ENCODE measurements at regions of chr7 and their contacts with region 1.

Region 1: DNA sequence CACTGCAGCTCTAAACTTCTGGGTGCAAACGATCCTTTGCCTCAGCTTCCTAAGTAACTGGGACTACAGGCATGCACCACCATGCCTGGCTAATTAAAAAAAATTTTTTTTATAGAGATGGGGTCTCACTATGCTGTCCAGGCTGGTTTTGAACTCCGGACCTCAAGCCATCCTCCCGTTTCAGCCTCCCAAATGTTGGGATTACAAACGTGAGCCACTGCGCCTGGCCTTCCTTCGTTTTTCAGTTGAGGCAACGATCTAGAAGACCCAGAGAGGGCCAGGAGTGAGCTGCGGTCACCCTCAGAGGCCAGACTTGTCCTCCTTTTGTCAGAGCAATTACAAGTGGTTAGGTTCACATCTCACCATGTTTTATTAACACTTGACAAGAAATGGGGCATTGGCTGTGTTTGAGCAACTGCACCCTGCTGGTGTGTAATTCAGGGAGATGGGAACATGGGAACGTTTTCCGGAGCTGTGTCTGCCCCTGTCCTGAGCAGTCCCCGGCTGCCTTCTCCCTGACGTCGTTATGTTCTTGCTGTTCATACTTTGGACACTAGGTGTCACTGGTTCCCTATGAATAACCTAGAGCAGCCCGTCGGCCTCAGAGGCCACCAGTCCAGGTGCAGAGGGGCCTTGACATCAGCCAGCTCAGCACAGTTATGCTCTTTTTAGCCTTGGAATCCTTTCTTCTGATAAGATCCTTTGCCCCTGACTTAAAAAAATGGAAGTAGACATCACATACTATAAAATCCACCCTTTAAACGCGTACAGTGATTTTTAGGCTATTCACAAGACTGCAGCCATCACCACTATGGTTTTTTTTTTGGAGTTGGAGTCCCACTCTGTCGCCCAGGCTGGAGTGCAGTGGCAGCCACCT is 375.0 kb downstream of the TYW1 start:
- DNase-seq: peak; percentile 60
- H3K4me3 Mint-ChIP-seq: no peak overlapping the region
- H3K27ac Mint-ChIP-seq: no peak overlapping the region
- H3K4me1 Mint-ChIP-seq: no peaks in the 10 kb centered on the region
- H3K27me3 Mint-ChIP-seq: peaks cover 9% of the 10 kb centered on the region

Region 2: GRCh38 chr7:67302113-67303039 is 69.3 kb before region 1 on chr7:
- CTCF ChIA-PET with region 1: no interaction called
- intact Hi-C with region 1: no loop called
- DNase-seq: peak; percentile 100
- H3K4me3 Mint-ChIP-seq: peak overlapping the region; percentile 89
- H3K27ac Mint-ChIP-seq: peak overlapping the region; percentile 92
- H3K4me1 Mint-ChIP-seq: peaks cover 26% of the 10 kb centered on the region
- H3K27me3 Mint-ChIP-seq: no peaks in the 10 kb centered on the region

Region 3: GRCh38 chr7:67348171-67348570 is 23.5 kb before region 1 on chr7:
- CTCF ChIA-PET with region 1: no interaction called
- intact Hi-C with region 1: no loop called
- DNase-seq: no peak
- H3K4me3 Mint-ChIP-seq: no peak overlapping the region
- H3K27ac Mint-ChIP-seq: no peak overlapping the region
- H3K4me1 Mint-ChIP-seq: no peaks in the 10 kb centered on the region
- H3K27me3 Mint-ChIP-seq: no peaks in the 10 kb centered on the region

Region 4: GRCh38 chr7:67484244-67484751 is 112.6 kb after region 1 on chr7:
- CTCF ChIA-PET with region 1: no interaction called
- intact Hi-C with region 1: loop called (anchors 10 kb)
- DNase-seq: peak; percentile 59
- H3K4me3 Mint-ChIP-seq: no peak overlapping the region
- H3K27ac Mint-ChIP-seq: no peak overlapping the region
- H3K4me1 Mint-ChIP-seq: peaks cover 4% of the 10 kb centered on the region
- H3K27me3 Mint-ChIP-seq: peaks cover 4% of the 10 kb centered on the region

Region 5: GRCh38 chr7:67625257-67625737 is 253.6 kb after region 1 on chr7:
- CTCF ChIA-PET with region 1: interaction called, 11 read pairs
- intact Hi-C with region 1: loop called (anchors 10 kb)
- DNase-seq: peak; percentile 49
- H3K4me3 Mint-ChIP-seq: no peak overlapping the region
- H3K27ac Mint-ChIP-seq: no peak overlapping the region
- H3K4me1 Mint-ChIP-seq: no peaks in the 10 kb centered on the region
- H3K27me3 Mint-ChIP-seq: peaks cover 3% of the 10 kb centered on the region

Measured in activated naive CD4-positive, alpha-beta T cell treated with anti-CD3 and anti-CD28 coated beads for 36 hours (primary cell).